Activated CD4-positive, alpha-beta memory T cell treated with anti-CD3 and anti-CD28 coated beads, Interleukin-2, amount 10 ng/mL, durations not matched to agents 7 days and 5 days (primary cell): ENCODE measurements at regions of chr6 and their contacts with region 1.

Region 1: GRCh38 chr6:53342217-53342616 is 6.5 kb downstream of the ELOVL5 start:
- DNase-seq: no peak
- H3K4me3 Mint-ChIP-seq: no peak overlapping the region
- H3K27ac Mint-ChIP-seq: no peak overlapping the region
- H3K4me1 Mint-ChIP-seq: peaks cover 92% of the 10 kb centered on the region
- H3K27me3 Mint-ChIP-seq: no peaks in the 10 kb centered on the region

Region 2: DNA sequence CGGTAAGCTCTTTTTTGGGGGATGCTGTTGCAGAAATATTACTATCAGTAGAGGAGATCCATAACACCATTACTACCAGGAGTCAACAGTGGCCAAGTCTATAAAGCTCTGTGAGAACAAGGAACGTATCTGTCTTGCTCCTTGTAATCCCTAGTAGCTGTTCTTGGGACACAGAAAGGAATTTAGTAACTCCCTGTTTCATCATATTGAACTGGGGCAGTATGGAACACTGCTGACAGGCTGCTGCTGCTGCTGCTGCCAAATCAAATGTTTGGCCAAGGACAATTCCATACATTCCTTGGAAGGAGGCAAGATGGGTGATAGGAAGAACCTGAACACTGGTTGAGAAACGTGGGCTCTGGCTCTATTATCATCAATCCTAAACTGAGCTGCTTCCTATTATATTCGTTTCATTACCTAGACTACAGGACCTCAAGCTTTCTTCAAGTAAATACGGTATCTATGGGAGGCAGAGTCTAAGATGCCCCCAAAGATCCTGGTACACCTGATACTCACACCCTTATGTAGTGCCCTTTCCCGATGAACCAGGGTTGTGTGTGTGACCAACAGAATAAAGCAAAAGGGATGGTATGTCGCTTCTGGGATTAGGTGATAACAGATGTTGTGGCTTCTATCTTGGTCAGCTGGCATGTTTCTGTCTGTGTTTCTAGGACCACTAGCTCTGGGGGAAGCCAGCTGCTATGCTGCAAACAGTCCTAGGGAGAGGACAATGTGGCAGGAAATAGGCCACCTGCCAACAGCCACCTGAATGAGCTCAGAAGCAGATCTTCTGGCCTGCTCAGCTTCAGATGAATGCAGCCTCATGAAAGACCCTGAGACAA is 32.9 kb before region 1 on chr6:
- CTCF ChIA-PET with region 1: interaction called, 4 read pairs
- POLR2A ChIA-PET with region 1: interaction called, 48 read pairs
- DNase-seq: no peak
- H3K4me3 Mint-ChIP-seq: no peak overlapping the region
- H3K27ac Mint-ChIP-seq: peak overlapping the region; percentile 41
- H3K4me1 Mint-ChIP-seq: peaks cover 82% of the 10 kb centered on the region
- H3K27me3 Mint-ChIP-seq: no peaks in the 10 kb centered on the region

Region 3: GRCh38 chr6:53359072-53359842 is 17.0 kb after region 1 on chr6:
- CTCF ChIA-PET with region 1: interaction called, 6 read pairs
- POLR2A ChIA-PET with region 1: interaction called, 98 read pairs
- DNase-seq: peak; percentile 95
- H3K4me3 Mint-ChIP-seq: peak overlapping the region; percentile 87
- H3K27ac Mint-ChIP-seq: peak overlapping the region; percentile 97
- H3K4me1 Mint-ChIP-seq: peaks cover 48% of the 10 kb centered on the region
- H3K27me3 Mint-ChIP-seq: peaks cover 3% of the 10 kb centered on the region

Region 4: GRCh38 chr6:53382421-53383205 is 40.4 kb after region 1 on chr6:
- CTCF ChIA-PET with region 1: no interaction called
- POLR2A ChIA-PET with region 1: no interaction called
- DNase-seq: no peak
- H3K4me3 Mint-ChIP-seq: no peak overlapping the region
- H3K27ac Mint-ChIP-seq: no peak overlapping the region
- H3K4me1 Mint-ChIP-seq: no peaks in the 10 kb centered on the region
- H3K27me3 Mint-ChIP-seq: peaks cover 31% of the 10 kb centered on the region